ENCODE measurements at regions of chr6 and their contacts with region 1.

Region 1: GRCh38 chr6:26568601-26569432 is 27.9 kb upstream of the ABT1 start:
- DNase-seq: peak; percentile 94
- H3K4me3 Mint-ChIP-seq: peak overlapping the region; percentile 93
- H3K27ac Mint-ChIP-seq: peak overlapping the region; percentile 98
- H3K4me1 Mint-ChIP-seq: peaks cover 47% of the 10 kb centered on the region
- H3K27me3 Mint-ChIP-seq: peaks cover 5% of the 10 kb centered on the region

Region 2: DNA sequence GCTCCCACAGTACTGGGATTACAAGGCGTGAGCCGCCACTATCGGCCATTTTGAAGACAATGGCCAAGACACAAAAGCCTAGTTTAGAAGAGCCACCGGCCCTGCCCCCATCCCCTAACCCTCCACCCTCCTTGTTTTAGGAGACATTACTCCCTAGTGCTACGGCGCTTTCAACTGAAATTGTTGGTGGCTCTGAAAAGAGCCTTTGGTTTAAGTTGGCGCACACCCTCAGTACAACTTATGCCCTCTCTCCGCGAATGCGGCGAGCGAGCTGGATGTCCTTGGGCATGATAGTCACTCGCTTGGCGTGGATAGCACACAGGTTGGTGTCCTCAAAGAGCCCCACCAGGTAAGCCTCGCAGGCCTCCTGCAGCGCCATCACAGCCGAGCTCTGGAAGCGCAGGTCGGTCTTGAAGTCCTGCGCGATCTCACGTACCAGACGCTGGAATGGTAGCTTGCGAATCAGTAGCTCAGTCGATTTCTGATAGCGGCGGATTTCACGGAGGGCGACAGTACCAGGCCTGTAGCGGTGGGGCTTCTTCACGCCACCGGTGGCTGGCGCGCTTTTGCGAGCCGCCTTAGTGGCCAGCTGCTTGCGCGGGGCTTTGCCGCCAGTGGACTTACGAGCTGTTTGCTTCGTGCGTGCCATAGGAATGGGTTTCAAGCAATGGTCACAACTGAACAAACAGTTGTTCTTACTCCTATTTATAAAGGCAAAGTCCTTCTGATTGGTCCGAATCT is 318.7 kb before region 1 on chr6:
- intact Hi-C with region 1: no loop called
- DNase-seq: peak; percentile 68
- H3K4me3 Mint-ChIP-seq: peak overlapping the region; percentile 90
- H3K27ac Mint-ChIP-seq: peak overlapping the region; percentile 99
- H3K4me1 Mint-ChIP-seq: peaks cover 55% of the 10 kb centered on the region
- H3K27me3 Mint-ChIP-seq: peaks cover 2% of the 10 kb centered on the region

Region 3: GRCh38 chr6:26493258-26493657 is 75.6 kb before region 1 on chr6:
- intact Hi-C with region 1: no loop called
- DNase-seq: no peak
- H3K4me3 Mint-ChIP-seq: peak overlapping the region; percentile 49
- H3K27ac Mint-ChIP-seq: no peak overlapping the region
- H3K4me1 Mint-ChIP-seq: peaks cover 45% of the 10 kb centered on the region
- H3K27me3 Mint-ChIP-seq: peaks cover 8% of the 10 kb centered on the region

Region 4: GRCh38 chr6:26507658-26508057 is 61.2 kb before region 1 on chr6:
- intact Hi-C with region 1: no loop called
- DNase-seq: no peak
- H3K4me3 Mint-ChIP-seq: no peak overlapping the region
- H3K27ac Mint-ChIP-seq: no peak overlapping the region
- H3K4me1 Mint-ChIP-seq: no peaks in the 10 kb centered on the region
- H3K27me3 Mint-ChIP-seq: peaks cover 37% of the 10 kb centered on the region

Region 5: GRCh38 chr6:26532699-26533531 is 35.9 kb before region 1 on chr6:
- intact Hi-C with region 1: loop called (anchors 1 kb)
- DNase-seq: peak; percentile 86
- H3K4me3 Mint-ChIP-seq: peak overlapping the region; percentile 94
- H3K27ac Mint-ChIP-seq: peak overlapping the region; percentile 95
- H3K4me1 Mint-ChIP-seq: peaks cover 46% of the 10 kb centered on the region
- H3K27me3 Mint-ChIP-seq: peaks cover 3% of the 10 kb centered on the region

Region 6: DNA sequence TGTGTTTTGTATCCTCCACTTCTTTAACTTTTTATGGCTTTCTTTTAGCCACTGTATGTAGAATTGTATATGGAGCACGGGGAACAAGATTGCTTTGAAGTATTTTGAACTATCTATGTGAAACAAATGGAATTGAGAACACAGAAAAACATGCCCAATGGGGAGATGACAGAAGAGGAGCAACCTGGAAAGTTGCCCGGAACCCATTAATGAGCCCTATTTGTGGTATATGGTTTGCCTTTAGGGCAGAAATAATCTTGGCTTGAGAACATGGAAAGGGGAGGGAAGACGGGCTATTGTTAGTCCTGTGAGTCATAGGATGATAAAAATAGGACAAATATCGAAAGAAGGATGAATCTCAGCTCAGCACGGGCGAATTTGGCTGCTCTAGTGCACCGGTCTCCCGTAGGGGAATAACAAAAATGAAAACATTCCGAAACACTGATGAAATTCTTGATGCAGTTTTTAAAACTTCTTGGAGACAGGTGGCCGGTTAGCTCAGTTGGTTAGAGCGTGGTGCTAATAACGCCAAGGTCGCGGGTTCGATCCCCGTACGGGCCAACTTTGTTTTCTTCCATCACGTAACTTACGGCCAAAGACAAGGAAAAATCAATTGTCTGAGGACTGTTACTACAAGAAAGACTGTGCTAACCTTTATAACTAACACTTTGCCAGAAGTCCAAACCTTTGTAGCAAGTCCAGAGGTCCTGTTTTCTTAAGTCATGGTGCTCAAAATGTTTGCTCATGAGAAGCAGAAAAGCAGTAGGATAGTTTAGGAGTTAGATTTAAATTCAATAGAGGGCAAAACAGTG is 15.0 kb before region 1 on chr6:
- intact Hi-C with region 1: loop called (anchors 1 kb)
- DNase-seq: peak; percentile 72
- H3K4me3 Mint-ChIP-seq: no peak overlapping the region
- H3K27ac Mint-ChIP-seq: no peak overlapping the region
- H3K4me1 Mint-ChIP-seq: peaks cover 18% of the 10 kb centered on the region
- H3K27me3 Mint-ChIP-seq: peaks cover 2% of the 10 kb centered on the region

Region 7: DNA sequence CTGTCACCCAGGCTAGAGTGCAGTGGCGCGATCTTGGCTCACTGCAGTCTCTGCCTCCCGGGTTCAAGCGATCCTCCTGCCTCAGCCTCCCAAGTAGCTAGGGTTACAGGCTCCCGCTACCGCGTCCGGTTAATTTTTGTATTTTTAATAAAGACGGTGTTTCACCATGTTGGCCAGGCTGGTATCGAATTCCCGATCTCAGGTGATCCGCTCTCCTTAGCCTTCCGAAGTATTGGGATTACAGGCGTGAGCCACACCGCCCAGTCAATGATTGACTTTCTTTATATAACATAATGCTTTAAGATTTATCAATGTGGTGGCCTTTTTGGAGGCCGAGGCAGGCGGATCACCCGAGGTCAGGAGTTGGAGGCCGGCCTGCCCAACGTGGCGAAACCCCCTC is 20.1 kb after region 1 on chr6:
- intact Hi-C with region 1: no loop called
- DNase-seq: no peak
- H3K4me3 Mint-ChIP-seq: no peak overlapping the region
- H3K27ac Mint-ChIP-seq: no peak overlapping the region
- H3K4me1 Mint-ChIP-seq: peaks cover under 1% of the 10 kb centered on the region
- H3K27me3 Mint-ChIP-seq: peaks cover 46% of the 10 kb centered on the region